ENCODE measurements at regions of chr17 and their contacts with region 1.

Region 1: DNA sequence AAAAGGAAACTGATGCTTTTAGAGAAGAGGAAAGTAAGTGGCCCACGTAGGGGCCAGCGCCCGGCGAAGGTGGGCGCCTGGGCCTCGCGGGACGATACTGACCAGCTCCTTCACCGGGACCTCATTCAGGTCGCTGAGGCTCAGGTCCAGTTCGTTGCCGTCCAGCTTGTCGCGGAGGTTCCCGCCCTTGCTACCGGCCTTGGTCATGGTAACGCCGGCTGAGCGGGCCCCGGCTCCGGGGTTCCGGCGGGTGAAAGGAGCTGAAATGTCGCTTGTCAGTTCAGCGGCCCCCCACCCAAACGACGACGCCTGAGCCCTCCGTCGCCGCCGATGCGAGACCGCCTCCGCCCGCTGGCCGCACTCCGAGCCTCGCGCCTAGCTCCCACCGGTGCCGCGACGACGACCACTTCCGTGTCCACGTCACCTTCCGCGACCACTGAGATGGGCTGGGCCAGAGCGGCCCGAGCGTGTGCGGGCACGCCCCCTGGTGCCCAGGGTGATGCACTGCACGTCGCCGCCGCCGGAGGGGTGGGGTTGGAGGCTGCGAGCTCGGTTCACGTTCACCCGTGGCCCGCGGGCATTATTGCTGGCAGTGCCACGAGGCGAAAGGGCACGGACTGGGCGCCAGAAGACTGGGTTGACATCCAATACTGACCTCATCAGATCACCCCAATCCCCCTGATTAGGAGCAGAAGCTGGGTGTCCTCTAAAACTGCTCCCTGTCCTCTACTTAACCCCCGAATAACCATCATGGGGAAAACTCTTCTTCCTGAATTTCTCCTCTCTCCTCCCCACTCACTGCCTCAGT is at the start of gene LRRC59:
- DNase-seq: peak; percentile 55
- ATAC-seq: peak; percentile 97
- H3K4me3 ChIP-seq: peak within 1 kb of the TSS; percentile 93
- H3K27ac ChIP-seq: peak within 1 kb of the TSS; percentile 81
- H3K4me1 ChIP-seq: peaks cover 5% of the 10 kb centered on the region
- H3K27me3 ChIP-seq: no peaks in the 10 kb centered on the region
- CTCF ChIP-seq: peak; percentile 99; a peak in 5 of 6 replicates
- EP300 ChIP-seq: 0 out of 4 replicates have a peak, but pooled peaks of 1 of the 2 experiments have one; percentile 42
- POLR2A ChIP-seq: peak; percentile 100
- RAD21 ChIP-seq: peak; percentile 43
- polyA plus RNA-seq, gene LRRC59: 8.8 to 17.9 TPM

Region 2: GRCh38 chr17:50372758-50373556 is 24.4 kb before region 1 on chr17 and contains the starts of genes EME1 and MRPL27:
- CTCF ChIA-PET with region 1: interaction called, 31 read pairs
- POLR2A ChIA-PET with region 1: interaction called, 5 read pairs
- RAD21 ChIA-PET with region 1: interaction called, 3 read pairs
- SMC1A ChIA-PET with region 1: interaction called, 6 read pairs
- in situ Hi-C with region 1: no loop called
- intact Hi-C with region 1: no loop called
- DNase-seq: peak; percentile 85
- ATAC-seq: peak; percentile 95
- H3K4me3 ChIP-seq: peak within 1 kb of the TSS; percentile 72
- H3K27ac ChIP-seq: peak within 1 kb of the TSS; percentile 95
- H3K4me1 ChIP-seq: no peaks in the 10 kb centered on the region; the same call in 1 of the 2 replicates
- H3K27me3 ChIP-seq: no peaks in the 10 kb centered on the region
- CTCF ChIP-seq: no peak
- EP300 ChIP-seq: peak in 1 of 2 experiments; percentile 54; a peak in 1 of 4 replicates
- POLR2A ChIP-seq: peak; percentile 99
- RAD21 ChIP-seq: no peak
- polyA plus RNA-seq, gene EME1: 13.8 to 16.7 TPM
- polyA plus RNA-seq, gene MRPL27: 380 to 390 TPM

Region 3: GRCh38 chr17:50380369-50381259 is 16.7 kb before region 1 on chr17:
- CTCF ChIA-PET with region 1: interaction called, 25 read pairs
- POLR2A ChIA-PET with region 1: interaction called, 4 read pairs
- RAD21 ChIA-PET with region 1: interaction called, 4 read pairs
- SMC1A ChIA-PET with region 1: interaction called, 11 read pairs
- in situ Hi-C with region 1: no loop called
- intact Hi-C with region 1: no loop called
- DNase-seq: no peak
- ATAC-seq: peak; percentile 36
- H3K4me3 ChIP-seq: no peak overlapping the region
- H3K27ac ChIP-seq: no peak overlapping the region
- H3K4me1 ChIP-seq: no peaks in the 10 kb centered on the region
- H3K27me3 ChIP-seq: no peaks in the 10 kb centered on the region
- CTCF ChIP-seq: 0 out of 6 replicates have a peak, but pooled peaks of 1 of the 3 experiments have one; percentile 8
- EP300 ChIP-seq: no peak
- POLR2A ChIP-seq: 0 out of 2 replicates have a peak, but pooled peaks have one; percentile 70
- RAD21 ChIP-seq: no peak

Region 4: DNA sequence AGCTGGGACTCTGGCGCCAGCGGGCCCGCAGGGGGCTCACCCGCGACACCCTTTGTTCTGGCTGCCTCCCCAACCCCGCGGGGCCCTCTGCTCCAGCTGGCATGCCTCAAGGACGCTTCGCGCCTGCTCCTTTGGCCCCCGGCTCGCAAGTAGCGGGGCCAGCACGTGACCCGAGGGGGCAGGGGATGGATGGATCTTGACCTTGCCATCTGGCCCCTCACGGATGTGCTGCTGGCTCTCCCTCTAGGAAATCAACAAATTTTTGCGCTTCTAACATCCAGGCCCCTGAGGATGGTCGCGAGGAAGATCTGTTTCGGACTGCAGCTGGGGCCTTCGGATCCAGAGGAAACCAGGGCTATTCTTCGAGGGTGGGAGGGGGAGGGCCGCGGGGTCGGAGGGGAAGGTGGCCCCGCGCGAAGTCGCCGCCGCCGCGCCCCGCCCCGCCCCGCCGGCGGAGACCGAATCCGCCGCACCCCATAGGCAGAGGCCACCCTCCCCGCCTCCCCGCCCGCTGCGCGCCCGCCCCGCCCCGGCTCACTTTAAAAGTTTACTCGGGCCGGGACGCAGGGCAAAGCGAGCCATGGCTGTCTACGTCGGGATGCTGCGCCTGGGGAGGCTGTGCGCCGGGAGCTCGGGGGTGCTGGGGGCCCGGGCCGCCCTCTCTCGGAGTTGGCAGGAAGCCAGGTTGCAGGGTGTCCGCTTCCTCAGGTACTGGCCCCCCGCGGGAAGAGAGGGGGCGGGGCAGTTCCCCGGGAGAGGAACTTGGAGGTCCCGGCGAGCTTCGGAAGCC is 28.6 kb after region 1 on chr17 and contains the start of gene ACSF2:
- CTCF ChIA-PET with region 1: interaction called, 50 read pairs
- POLR2A ChIA-PET with region 1: interaction called, 31 read pairs
- RAD21 ChIA-PET with region 1: interaction called, 20 read pairs
- SMC1A ChIA-PET with region 1: interaction called, 22 read pairs
- in situ Hi-C with region 1: no loop called
- intact Hi-C with region 1: loop called (anchors 1 kb)
- DNase-seq: no peak
- ATAC-seq: peak; percentile 88
- H3K4me3 ChIP-seq: peak within 1 kb of the TSS; percentile 84
- H3K27ac ChIP-seq: peak within 1 kb of the TSS; percentile 74
- H3K4me1 ChIP-seq: peaks cover 26% of the 10 kb centered on the region
- H3K27me3 ChIP-seq: no peaks in the 10 kb centered on the region
- CTCF ChIP-seq: no peak
- EP300 ChIP-seq: no peak
- POLR2A ChIP-seq: peak; percentile 80
- RAD21 ChIP-seq: no peak
- polyA plus RNA-seq, gene ACSF2: 10.4 to 14.8 TPM

Region 5: GRCh38 chr17:50431233-50431632 is 33.9 kb after region 1 on chr17:
- CTCF ChIA-PET with region 1: interaction called, 45 read pairs
- POLR2A ChIA-PET with region 1: interaction called, 17 read pairs
- RAD21 ChIA-PET with region 1: interaction called, 20 read pairs
- SMC1A ChIA-PET with region 1: interaction called, 4 read pairs
- in situ Hi-C with region 1: no loop called
- intact Hi-C with region 1: loop called (anchors 2 kb)
- DNase-seq: no peak
- ATAC-seq: no peak
- H3K4me3 ChIP-seq: no peak overlapping the region
- H3K27ac ChIP-seq: no peak overlapping the region
- H3K4me1 ChIP-seq: peaks cover 8% of the 10 kb centered on the region
- H3K27me3 ChIP-seq: no peaks in the 10 kb centered on the region
- CTCF ChIP-seq: no peak
- EP300 ChIP-seq: no peak
- POLR2A ChIP-seq: no peak
- RAD21 ChIP-seq: no peak

Region 6: DNA sequence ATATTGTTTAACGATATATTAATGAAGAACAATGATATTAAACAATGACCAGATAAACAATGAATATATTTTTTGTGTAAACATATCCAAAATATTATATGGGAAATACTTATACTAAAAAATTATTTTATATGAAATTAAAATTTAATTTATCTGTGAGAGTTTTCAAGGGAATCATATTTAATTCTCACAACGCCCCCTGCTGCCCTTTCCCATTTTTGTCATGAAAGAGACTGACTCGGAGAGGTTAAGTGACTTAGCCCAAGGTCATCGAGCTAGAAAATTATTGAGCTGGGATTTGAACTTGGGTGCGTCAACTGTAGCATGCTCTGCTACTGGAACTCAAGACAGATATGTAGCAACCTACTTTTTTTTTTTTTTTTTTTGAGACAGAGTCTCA is 103.7 kb after region 1 on chr17:
- CTCF ChIA-PET with region 1: interaction called, 3 read pairs
- POLR2A ChIA-PET with region 1: interaction called, 12 read pairs
- RAD21 ChIA-PET with region 1: interaction called, 3 read pairs
- SMC1A ChIA-PET with region 1: no interaction called
- in situ Hi-C with region 1: no loop called
- intact Hi-C with region 1: no loop called
- DNase-seq: no peak
- ATAC-seq: no peak
- H3K4me3 ChIP-seq: no peak overlapping the region
- H3K27ac ChIP-seq: no peak overlapping the region
- H3K4me1 ChIP-seq: no peaks in the 10 kb centered on the region
- H3K27me3 ChIP-seq: no peaks in the 10 kb centered on the region
- CTCF ChIP-seq: peak; percentile 27 to 45 (median 38); a peak in 5 of 6 replicates
- EP300 ChIP-seq: no peak
- POLR2A ChIP-seq: no peak
- RAD21 ChIP-seq: no peak